Dorsolateral prefrontal cortex (tissue), 120 donors: ENCODE measurements at regions of chr1 and their contacts with region 1.

Region 1: GRCh38 chr1:71049951-71050598 is 2.5 kb upstream of the PTGER3 start:
- DNase-seq: no peak
- H3K4me3 ChIP-seq: no peak overlapping the region
- H3K27ac ChIP-seq: no peak overlapping the region
- H3K27me3 ChIP-seq: peaks cover 6 to 50% (median 27%) of the 10 kb centered on the region in 45 donors
- CTCF ChIP-seq: peak; percentile 52 to 93 (median 81)

Region 2: GRCh38 chr1:70528590-70529333 is 521.3 kb before region 1 on chr1:
- intact Hi-C with region 1: loop called (anchors 5 to 10 kb)
- DNase-seq: peak in 1 of 10 donors; percentile 19
- H3K4me3 ChIP-seq: peak overlapping the region in 3 of 59 donors; percentile 15 to 29 (median 25)
- H3K27ac ChIP-seq: no peak overlapping the region
- H3K27me3 ChIP-seq: peaks cover 0 to 14% (median 0%) of the 10 kb centered on the region in 45 donors
- CTCF ChIP-seq: peak in 54 of 56 donors; percentile 26 to 77 (median 56)

Region 3: DNA sequence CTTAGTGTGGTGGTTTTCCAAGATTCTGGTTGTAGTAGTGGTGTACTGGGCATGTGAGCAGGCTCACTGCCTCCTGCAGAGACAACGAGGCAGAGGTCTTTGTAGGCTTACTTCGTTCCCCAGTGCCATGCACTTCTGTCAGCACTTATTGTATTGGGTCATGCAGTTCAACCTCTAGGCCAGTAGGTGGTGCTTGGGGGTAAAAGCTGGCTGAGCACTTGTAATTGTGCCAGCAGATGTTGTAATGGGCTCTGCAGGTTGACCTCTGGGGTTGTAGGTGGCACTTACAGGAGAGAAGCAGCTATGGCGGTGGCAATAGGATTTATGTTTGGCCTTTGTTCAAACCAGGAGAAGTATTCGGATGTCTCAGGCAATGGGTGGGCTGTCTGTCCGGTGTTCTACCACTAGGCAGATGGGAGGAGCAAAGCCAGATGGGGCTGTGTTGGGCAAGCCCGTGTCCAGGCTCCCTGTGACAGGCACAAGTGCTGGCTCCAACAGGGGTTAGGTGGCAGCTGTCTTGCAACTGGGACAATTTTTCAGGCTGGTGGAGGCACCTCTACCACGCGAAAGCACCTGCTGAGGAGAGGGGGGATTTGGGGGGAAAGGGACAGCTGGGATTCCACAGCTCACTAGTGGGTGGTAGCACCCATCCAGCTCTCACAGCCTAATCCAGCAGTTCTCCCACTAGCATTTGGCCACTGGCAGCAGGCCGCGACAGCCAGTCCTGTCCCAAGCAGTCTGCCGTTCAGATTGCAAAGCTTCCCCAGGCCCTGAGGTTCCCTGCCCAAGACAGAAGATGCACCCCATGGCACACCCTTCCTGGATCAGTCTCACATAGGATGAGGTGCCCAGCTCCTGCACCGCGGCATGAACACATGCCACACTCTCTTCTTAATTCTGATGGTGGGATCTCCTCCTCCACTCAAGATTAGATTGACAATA is 364.5 kb before region 1 on chr1:
- intact Hi-C with region 1: loop called (anchors 2 to 5 kb)
- DNase-seq: peak in 3 of 10 donors; percentile 19 to 45 (median 32)
- H3K4me3 ChIP-seq: no peak overlapping the region
- H3K27ac ChIP-seq: no peak overlapping the region
- H3K27me3 ChIP-seq: peaks cover 0 to 12% (median 0%) of the 10 kb centered on the region in 45 donors
- CTCF ChIP-seq: peak; percentile 48 to 78 (median 67)